Activated CD8-positive, alpha-beta T cell treated with anti-CD3 and anti-CD28 coated beads, Interleukin-2, amount 10 ng/mL, durations not matched to agents 7 days and 5 days (primary cell): ENCODE measurements at regions of chr9 and their contacts with region 1.

Region 1: GRCh38 chr9:131125128-131126058 is at the start of gene NUP214:
- DNase-seq: peak; percentile 100
- ATAC-seq: peak; percentile 100
- H3K4me3 Mint-ChIP-seq: peak within 1 kb of the TSS; percentile 96
- H3K27ac Mint-ChIP-seq: peak within 1 kb of the TSS; percentile 97
- H3K4me1 Mint-ChIP-seq: peaks cover 27% of the 10 kb centered on the region
- H3K27me3 Mint-ChIP-seq: no peaks in the 10 kb centered on the region
- total RNA-seq, gene NUP214: 61.3 to 63.5 TPM

Region 2: DNA sequence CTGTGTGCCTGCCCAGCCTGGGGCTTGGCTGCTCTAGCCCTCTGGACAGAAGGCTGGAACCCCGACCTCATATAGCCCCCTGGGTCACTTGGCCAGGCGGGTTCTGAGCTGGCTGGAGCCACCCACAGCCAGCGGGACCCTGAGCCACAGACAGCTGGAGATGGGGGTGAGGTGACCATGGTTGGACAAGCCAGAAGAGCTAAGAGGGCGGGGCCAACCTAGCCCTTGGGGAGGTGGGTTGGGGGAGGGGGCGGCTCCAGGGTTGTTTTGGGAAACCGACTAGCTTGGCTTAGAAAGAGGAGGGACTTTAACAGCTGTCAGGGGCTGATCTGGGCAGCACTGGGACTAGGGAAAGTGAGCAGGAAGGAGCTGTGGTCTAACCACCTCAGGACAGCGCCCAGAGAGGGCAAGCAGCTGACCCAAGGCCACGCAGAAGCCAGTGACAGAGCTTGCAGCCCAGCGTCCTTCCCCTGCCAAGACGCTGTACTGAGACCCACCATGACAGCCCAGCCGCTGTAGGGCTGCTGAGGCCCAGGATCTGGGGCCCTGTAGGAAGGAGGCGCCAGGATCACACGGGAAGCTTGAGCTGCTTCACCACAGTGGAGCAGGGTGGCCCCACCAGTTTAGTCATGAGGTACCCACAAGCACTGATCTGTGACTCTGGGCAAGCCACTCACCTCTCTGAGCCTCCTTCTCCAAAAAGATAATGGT is 26.8 kb before region 1 on chr9:
- CTCF ChIA-PET with region 1: no interaction called
- POLR2A ChIA-PET with region 1: interaction called, 13 read pairs
- DNase-seq: no peak
- ATAC-seq: no peak
- H3K4me3 Mint-ChIP-seq: no peak overlapping the region
- H3K27ac Mint-ChIP-seq: no peak overlapping the region
- H3K4me1 Mint-ChIP-seq: peaks cover 8% of the 10 kb centered on the region
- H3K27me3 Mint-ChIP-seq: peaks cover 36% of the 10 kb centered on the region

Region 3: DNA sequence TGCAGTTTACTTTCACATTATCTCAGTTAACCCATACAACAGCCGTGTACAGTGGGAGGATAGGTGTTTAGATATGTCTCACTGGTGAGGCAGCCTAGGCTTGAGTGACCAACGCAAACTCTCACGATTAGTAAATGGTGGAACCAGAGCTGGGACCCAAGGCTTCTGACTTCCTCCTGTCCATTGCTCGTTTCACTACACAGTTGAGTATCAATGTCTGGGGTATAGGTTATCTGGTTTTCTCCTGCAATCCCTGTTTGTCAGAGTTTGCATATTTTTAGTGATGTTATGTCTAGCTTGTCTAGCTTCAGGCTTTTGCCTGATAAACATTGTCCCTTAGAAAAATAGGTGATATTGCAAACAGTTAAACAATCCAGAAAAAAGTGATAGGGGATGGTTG is 62.6 kb after region 1 on chr9:
- CTCF ChIA-PET with region 1: no interaction called
- POLR2A ChIA-PET with region 1: no interaction called
- DNase-seq: no peak
- ATAC-seq: no peak
- H3K4me3 Mint-ChIP-seq: no peak overlapping the region
- H3K27ac Mint-ChIP-seq: no peak overlapping the region
- H3K4me1 Mint-ChIP-seq: no peaks in the 10 kb centered on the region
- H3K27me3 Mint-ChIP-seq: no peaks in the 10 kb centered on the region